Cardiac septum (tissue), 1 donor: ENCODE measurements at regions of chr13 and their contacts with region 1.

Region 1: DNA sequence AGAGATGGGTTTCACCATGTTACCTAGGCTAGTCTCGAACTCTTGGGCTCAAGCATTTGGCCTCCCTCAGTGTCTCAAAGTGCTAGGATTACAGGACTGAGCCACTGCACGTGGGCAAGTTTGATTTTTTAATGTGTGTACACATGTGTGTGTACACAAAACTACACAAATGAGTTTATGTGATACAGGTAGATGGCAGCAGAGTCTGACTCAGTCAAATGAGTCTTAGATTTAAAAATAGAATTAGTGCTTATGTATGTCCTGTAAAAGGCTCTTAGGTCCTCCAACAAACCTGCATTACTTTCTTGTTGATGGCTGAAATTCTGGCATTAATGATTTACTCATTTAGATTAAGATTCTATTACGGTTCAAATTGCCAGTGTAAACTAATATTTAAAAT is 293.7 kb downstream of the PCDH17 start:
- DNase-seq: no peak

Region 2: DNA sequence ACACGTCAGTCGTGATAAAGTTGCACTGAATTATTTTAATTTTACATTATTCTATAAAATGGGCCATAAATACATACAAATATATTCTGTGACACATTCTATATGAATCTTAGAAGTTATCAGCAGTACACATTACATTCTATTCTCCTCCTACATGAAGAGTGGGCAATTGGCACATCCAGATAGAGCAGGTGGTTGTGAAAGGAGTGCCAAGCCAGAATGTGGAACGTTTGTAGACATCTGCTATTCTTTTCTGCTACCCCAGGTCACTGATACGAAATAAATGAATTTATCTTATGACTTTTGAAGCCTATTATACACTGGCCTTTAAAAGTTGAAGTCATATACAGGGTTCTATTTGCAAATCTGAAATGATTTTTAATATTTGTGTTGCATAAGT is 79.5 kb after region 1 on chr13:
- intact Hi-C with region 1: no loop called
- DNase-seq: no peak

Region 3: DNA sequence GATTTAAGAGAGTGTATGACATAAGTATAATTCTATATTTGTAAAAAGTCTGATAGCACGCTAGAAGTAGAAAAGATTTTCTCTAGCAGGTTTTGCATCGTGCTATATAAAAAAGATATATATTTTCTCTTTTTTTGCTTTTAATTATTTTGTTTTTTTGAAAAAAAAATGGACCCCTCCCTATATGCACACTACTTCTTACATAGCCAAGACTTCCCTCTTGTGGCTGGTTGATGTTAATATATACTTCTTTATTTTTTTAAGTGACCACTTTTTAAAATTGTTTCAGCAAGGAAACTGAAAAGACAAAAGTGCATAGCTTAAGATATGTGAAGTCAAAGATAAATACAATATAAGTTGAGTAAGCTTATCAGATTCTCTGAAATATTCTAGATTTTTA is 1035.6 kb after region 1 on chr13:
- intact Hi-C with region 1: loop called (anchors 10 kb)
- DNase-seq: no peak